ENCODE measurements at regions of chr1 and their contacts with region 1.

Region 1: GRCh38 chr1:2314803-2315673 is 76.3 kb downstream of the MORN1 start:
- DNase-seq: peak in 4 of 7 donors; percentile 40 to 54 (median 50)
- H3K4me3 ChIP-seq: peak overlapping the region in 2 of 4 donors; percentile 81 to 86
- H3K27ac ChIP-seq: peak overlapping the region in 4 of 5 donors; percentile 65 to 90 (median 74)
- H3K4me1 ChIP-seq: peaks cover 11 to 43% of the 10 kb centered on the region in 2 donors
- H3K27me3 ChIP-seq: no peaks in the 10 kb centered on the region
- CTCF ChIP-seq: peak; percentile 39 to 95 (median 64)
- POLR2A ChIP-seq: no peak

Region 2: DNA sequence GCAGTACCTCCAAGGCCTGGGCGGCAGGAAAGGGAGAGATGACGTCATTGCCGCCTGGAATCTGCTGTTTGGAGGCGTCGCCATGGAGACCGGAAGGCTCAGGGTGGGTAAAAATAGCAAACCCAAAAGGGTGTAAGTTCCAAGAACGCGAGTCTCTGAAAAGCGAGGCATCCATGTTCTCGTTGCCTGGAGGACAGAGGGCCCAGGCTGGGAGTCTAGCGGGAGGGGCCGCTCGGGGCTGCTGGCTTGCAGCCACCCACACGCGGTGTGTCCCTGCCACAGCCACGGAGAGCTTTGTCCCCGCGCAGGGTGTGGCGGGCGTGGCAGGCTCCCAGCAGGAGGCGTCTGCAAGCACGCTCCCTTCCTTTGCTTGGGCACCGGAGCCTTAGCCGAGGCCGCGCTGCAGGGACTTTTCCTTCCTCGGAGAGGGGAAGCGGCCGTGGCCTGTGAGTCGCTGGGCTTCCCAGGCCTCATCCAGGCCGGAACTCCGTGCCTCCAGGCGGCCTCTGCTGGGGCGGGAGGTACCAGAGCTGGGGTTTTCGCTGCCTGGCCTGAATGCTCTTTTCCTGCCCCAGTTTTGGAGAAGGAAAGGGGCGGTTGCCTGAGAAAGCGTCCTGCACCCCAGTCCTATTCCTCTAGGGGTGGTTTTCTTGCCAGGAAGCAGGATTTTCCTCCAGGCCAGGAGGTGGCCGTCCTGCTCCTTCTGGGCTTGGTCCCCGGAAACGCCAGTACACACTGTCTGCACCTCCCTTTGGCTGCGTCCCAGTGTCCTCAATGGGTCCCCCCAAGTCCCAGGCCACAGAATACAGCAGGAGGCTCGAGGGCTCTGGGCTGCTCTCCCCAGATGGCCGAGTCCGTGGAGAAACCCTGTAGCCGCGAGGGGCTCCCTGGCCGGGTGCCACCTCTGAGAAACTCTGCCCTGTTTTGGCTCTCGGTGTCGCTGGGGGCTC is 102.2 kb before region 1 on chr1:
- intact Hi-C with region 1: loop called in 1 of 2 experiments (anchors 5 kb)
- DNase-seq: peak; percentile 90 to 98 (median 95)
- H3K4me3 ChIP-seq: peak overlapping the region in 1 of 4 donors; percentile 24
- H3K27ac ChIP-seq: peak overlapping the region; percentile 85 to 98 (median 94)
- H3K4me1 ChIP-seq: peaks cover 34 to 43% of the 10 kb centered on the region in 2 donors
- H3K27me3 ChIP-seq: no peaks in the 10 kb centered on the region
- CTCF ChIP-seq: peak in 5 of 6 experiments; percentile 18 to 60 (median 34)
- POLR2A ChIP-seq: peak in 1 of 2 donors; percentile 65

Region 3: DNA sequence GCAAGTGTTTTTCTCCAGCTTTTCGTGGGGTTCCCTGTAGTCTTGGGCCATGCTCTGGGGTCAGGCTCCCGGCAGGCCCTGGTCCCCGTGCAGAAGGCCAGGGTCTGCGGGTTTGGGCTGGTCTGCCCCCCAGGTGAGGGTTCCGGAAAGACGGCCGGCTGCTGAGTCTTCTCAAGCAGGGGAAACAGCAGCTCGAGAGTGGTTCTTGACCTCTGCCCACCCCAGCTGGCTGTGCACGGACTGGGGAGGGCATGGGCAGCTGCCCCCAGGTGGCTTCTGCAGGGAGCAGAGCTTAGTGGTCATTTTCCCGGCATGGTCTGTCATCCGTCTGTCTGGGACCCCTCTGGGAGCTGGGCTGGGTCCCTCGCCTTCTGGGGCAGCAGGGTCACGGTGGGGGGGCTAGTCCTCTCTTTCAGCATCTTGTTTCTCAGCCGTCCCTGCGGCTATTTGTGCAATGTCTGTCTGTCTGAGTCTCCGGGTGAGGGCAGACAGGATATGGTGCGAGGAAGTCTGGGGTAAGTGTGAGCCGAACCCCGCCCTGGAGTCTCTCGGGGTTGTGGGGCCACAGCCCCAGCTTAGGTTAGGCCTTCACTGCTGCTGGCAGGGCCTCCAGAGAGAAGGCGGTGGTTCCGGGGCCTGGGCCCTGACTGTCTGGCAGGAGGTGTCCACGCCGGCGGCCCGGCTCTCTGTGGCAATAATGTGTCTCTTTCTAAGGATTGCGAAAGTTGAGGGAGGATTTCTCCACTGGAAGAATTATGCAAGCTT is 80.9 kb before region 1 on chr1:
- intact Hi-C with region 1: loop called (anchors 5 kb)
- DNase-seq: peak; percentile 84 to 98 (median 96)
- H3K4me3 ChIP-seq: peak overlapping the region in 1 of 4 donors; percentile 82
- H3K27ac ChIP-seq: peak overlapping the region; percentile 78 to 96 (median 87)
- H3K4me1 ChIP-seq: peaks cover 72 to 99% of the 10 kb centered on the region in 2 donors
- H3K27me3 ChIP-seq: no peaks in the 10 kb centered on the region
- CTCF ChIP-seq: no peak
- POLR2A ChIP-seq: peak in 1 of 2 donors; percentile 61

Measured in adrenal gland (tissue), 19 donors.